Caco-2 (cell line): ENCODE measurements at regions of chrX and their contacts with region 1.

Region 1: DNA sequence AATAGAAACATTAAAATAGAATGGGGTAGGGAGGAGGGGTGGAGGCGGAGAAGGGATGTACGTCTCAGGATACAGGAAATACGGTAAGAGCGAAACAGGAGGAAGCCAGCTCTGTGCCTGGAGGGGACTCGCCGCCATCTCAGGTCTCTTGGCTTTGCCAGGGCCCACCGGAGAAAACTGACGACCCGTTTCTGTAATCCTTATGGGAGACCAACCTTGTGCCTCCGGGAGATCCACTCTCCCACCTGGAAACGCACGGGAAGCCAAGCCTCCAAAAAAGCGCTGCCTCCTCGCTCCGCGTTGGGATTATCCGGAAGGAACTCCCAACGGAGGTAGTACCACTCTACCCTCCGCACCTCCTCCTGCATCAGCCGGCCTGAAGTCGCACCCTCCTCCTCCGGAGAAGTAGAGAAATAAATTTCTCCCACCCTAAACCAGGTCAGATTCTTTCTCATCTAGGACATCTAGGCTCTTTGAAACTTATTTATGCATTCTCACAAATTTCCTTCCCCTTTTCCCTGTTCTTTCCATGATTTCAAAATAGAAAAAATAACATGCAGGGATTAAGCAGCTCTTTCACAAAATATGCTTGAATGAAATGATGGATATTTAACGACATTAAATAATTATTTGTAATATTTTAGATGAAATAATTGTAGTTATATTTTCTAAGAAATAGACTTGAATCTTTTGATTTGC is at the start of gene NBDY:
- DNase-seq: peak in 1 of 2 experiments; percentile 25
- H3K4me3 ChIP-seq: peak within 1 kb of the TSS; percentile 65
- H3K4me3 Mint-ChIP-seq: peak within 1 kb of the TSS; percentile 81
- H3K27ac Mint-ChIP-seq: peak within 1 kb of the TSS; percentile 45
- H3K4me1 ChIP-seq: no peaks in the 10 kb centered on the region
- H3K4me1 Mint-ChIP-seq: no peaks in the 10 kb centered on the region
- H3K27me3 ChIP-seq: no peaks in the 10 kb centered on the region
- H3K27me3 Mint-ChIP-seq: peaks cover 2% of the 10 kb centered on the region
- CTCF ChIP-seq: no peak
- total RNA-seq, gene NBDY: 27.9 and 29.4 TPM in 2 replicates

Region 2: DNA sequence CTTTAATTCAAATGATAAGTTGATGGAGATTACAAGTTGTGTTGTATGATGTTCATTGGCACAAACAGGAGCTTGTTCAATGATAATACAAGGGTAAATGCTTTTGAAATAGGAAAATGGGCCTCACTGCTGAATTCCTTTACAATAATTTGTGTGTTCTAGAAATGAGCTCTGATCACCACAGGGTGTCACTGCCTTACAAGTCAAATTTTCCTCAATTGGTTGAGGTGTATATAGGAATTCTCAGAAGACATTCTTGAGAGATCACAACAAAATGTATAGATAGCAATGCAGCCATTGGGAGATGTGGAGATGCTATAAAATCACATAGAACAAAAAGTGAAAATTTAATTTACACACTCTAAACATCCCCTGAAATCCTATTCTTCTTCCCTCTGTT is 447.5 kb before region 1 on chrX:
- CTCF ChIA-PET with region 1: interaction called, 7 read pairs
- POLR2A ChIA-PET with region 1: no interaction called
- intact Hi-C with region 1: loop called (anchors 1 kb)
- DNase-seq: peak in 1 of 2 experiments; percentile 9
- H3K4me3 ChIP-seq: no peak overlapping the region
- H3K4me3 Mint-ChIP-seq: no peak overlapping the region
- H3K27ac Mint-ChIP-seq: no peak overlapping the region
- H3K4me1 ChIP-seq: no peaks in the 10 kb centered on the region
- H3K4me1 Mint-ChIP-seq: no peaks in the 10 kb centered on the region
- H3K27me3 ChIP-seq: no peaks in the 10 kb centered on the region
- H3K27me3 Mint-ChIP-seq: no peaks in the 10 kb centered on the region
- CTCF ChIP-seq: peak; percentile 19 to 28

Region 3: GRCh38 chrX:56503941-56504662 is 225.2 kb before region 1 on chrX:
- CTCF ChIA-PET with region 1: no interaction called
- POLR2A ChIA-PET with region 1: no interaction called
- intact Hi-C with region 1: no loop called
- DNase-seq: no peak
- H3K4me3 ChIP-seq: no peak overlapping the region
- H3K4me3 Mint-ChIP-seq: no peak overlapping the region
- H3K27ac Mint-ChIP-seq: no peak overlapping the region
- H3K4me1 ChIP-seq: no peaks in the 10 kb centered on the region
- H3K4me1 Mint-ChIP-seq: no peaks in the 10 kb centered on the region
- H3K27me3 ChIP-seq: no peaks in the 10 kb centered on the region
- H3K27me3 Mint-ChIP-seq: no peaks in the 10 kb centered on the region
- CTCF ChIP-seq: no peak

Region 4: GRCh38 chrX:56600141-56600540 is 129.2 kb before region 1 on chrX:
- CTCF ChIA-PET with region 1: no interaction called
- POLR2A ChIA-PET with region 1: no interaction called
- intact Hi-C with region 1: loop called (anchors 5 kb)
- DNase-seq: no peak
- H3K4me3 ChIP-seq: no peak overlapping the region
- H3K4me3 Mint-ChIP-seq: no peak overlapping the region
- H3K27ac Mint-ChIP-seq: no peak overlapping the region
- H3K4me1 ChIP-seq: no peaks in the 10 kb centered on the region
- H3K4me1 Mint-ChIP-seq: peaks cover 10% of the 10 kb centered on the region
- H3K27me3 ChIP-seq: no peaks in the 10 kb centered on the region
- H3K27me3 Mint-ChIP-seq: no peaks in the 10 kb centered on the region
- CTCF ChIP-seq: no peak